ENCODE measurements at regions of chr1 and their contacts with region 1.

Region 1: GRCh38 chr1:6336776-6337622 is 56.6 kb downstream of the ACOT7 start:
- H3K4me3 ChIP-seq: no peak overlapping the region
- H3K27ac ChIP-seq: no peak overlapping the region
- H3K4me1 ChIP-seq: peaks cover 6% of the 10 kb centered on the region
- CTCF ChIP-seq: no peak

Region 2: GRCh38 chr1:6378096-6378746 is 41.2 kb after region 1 on chr1:
- CTCF ChIA-PET with region 1: no interaction called
- POLR2A ChIA-PET with region 1: interaction called, 12 read pairs
- H3K4me3 ChIP-seq: no peak overlapping the region
- H3K27ac ChIP-seq: 0 out of 2 replicates have a peak overlapping the region, but pooled peaks have one; percentile 17
- H3K4me1 ChIP-seq: no peaks in the 10 kb centered on the region
- CTCF ChIP-seq: peak; percentile 32; the same call in 1 of the 2 replicates

Measured in HEK293 (cell line).